CD4-positive, alpha-beta memory T cell (primary cell): ENCODE measurements at regions of chr7 and their contacts with region 1.

Region 1: GRCh38 chr7:143008007-143008901 is 18.7 kb downstream of the OR9A2 start:
- DNase-seq: peak; percentile 69 to 80 (median 76)
- H3K4me3 ChIP-seq: no peak overlapping the region
- H3K4me3 Mint-ChIP-seq: peak overlapping the region in 1 of 8 donors; percentile 15
- H3K27ac ChIP-seq: no peak overlapping the region
- H3K27ac Mint-ChIP-seq: peak overlapping the region in 2 of 7 donors; percentile 5 to 65
- H3K4me1 ChIP-seq: peaks cover 3% of the 10 kb centered on the region
- H3K4me1 Mint-ChIP-seq: peaks cover 4 to 6% (median 6%) of the 10 kb centered on the region in 4 donors
- H3K27me3 ChIP-seq: no peaks in the 10 kb centered on the region
- H3K27me3 Mint-ChIP-seq: peaks cover 6 to 7% of the 10 kb centered on the region in 2 donors

Region 2: GRCh38 chr7:141975806-141976523 is 1032.3 kb before region 1 on chr7:
- CTCF ChIA-PET with region 1: interaction called, 8 read pairs
- POLR2A ChIA-PET with region 1: no interaction called
- intact Hi-C with region 1: loop called (anchors 2 kb)
- DNase-seq: peak; percentile 33 to 54 (median 51)
- H3K4me3 ChIP-seq: peak overlapping the region; percentile 24 to 49
- H3K4me3 Mint-ChIP-seq: peak overlapping the region; percentile 47 to 85 (median 81)
- H3K27ac ChIP-seq: no peak overlapping the region
- H3K27ac Mint-ChIP-seq: peak overlapping the region in 6 of 7 donors; percentile 0 to 86 (median 50)
- H3K4me1 ChIP-seq: peaks cover 9% of the 10 kb centered on the region
- H3K4me1 Mint-ChIP-seq: peaks cover 5 to 18% (median 9%) of the 10 kb centered on the region in 4 donors
- H3K27me3 ChIP-seq: no peaks in the 10 kb centered on the region
- H3K27me3 Mint-ChIP-seq: no peaks in the 10 kb centered on the region

Region 3: DNA sequence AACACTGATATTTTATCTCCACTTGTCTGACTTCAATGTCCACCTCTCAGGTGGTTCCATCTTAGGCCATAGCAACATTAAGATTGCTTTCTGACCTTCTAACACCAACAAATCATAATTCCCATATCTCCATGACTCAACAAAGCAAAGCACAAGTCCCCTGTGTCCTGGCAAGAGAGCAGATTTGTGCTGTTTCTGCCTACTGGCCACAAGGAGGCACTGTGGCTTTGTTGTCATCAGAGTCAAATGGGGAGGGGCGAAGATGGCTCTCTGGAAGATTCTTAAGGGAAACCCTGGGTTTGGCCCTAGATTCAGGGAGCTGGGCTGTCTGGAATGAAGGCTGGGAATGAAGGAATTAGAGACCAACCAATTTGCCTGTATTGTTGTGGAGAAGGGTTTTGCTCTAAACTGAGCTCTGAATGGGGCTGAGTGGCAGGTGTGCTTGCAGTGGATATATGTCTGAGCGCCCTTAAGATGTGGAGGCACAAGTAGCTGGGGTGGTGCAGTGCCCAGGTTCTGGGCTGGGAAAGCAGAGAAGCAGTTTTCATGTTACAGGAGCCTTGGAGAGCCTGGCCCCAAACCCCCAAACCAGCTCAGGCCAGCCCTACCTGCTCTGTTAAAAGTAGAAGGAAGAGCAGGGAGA is 595.6 kb before region 1 on chr7:
- CTCF ChIA-PET with region 1: interaction called, 5 read pairs
- POLR2A ChIA-PET with region 1: no interaction called
- intact Hi-C with region 1: loop called (anchors 1 kb)
- DNase-seq: peak; percentile 38 to 48 (median 41)
- H3K4me3 ChIP-seq: no peak overlapping the region
- H3K4me3 Mint-ChIP-seq: peak overlapping the region in 4 of 8 donors; percentile 8 to 36 (median 24)
- H3K27ac ChIP-seq: no peak overlapping the region
- H3K27ac Mint-ChIP-seq: peak overlapping the region in 4 of 7 donors; percentile 18 to 74 (median 28)
- H3K4me1 ChIP-seq: no peaks in the 10 kb centered on the region
- H3K4me1 Mint-ChIP-seq: peaks cover 1 to 6% (median 3%) of the 10 kb centered on the region in 4 donors
- H3K27me3 ChIP-seq: no peaks in the 10 kb centered on the region
- H3K27me3 Mint-ChIP-seq: no peaks in the 10 kb centered on the region

Region 4: DNA sequence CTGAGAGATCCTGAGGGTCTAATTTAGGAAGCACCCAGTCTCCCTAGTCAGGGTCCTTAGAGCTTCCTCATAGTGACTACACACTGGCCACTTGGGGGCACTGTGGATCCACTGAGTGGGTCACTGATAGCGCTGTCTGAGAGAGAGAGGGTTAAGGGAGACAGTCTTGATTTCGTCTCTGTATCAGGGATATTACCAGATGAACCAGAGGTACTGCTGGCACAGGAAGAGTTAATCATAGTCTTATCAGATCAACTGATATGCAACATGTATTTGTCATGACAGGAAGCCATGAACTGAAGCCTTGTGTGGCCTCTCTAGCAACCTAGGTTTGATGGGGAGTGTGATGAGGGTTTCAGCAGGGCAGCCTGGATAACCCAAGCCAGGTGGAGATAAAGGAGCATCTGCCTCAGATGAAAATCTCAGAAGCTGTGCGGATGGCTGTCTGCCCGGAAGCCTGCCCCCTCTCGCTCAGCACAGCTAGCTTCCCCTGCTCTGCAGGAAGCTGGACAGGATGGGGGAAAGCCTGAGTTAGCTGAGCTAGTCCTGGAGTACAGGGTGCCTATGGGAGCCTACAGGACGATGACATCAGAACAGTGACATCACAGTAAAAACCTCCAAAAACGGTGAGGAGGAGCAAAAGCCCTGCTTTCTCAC is 473.0 kb before region 1 on chr7:
- CTCF ChIA-PET with region 1: interaction called, 14 read pairs
- POLR2A ChIA-PET with region 1: no interaction called
- intact Hi-C with region 1: loop called (anchors 1 kb)
- DNase-seq: peak; percentile 57 to 80 (median 64)
- H3K4me3 ChIP-seq: peak overlapping the region in 1 of 2 donors; percentile 38
- H3K4me3 Mint-ChIP-seq: peak overlapping the region; percentile 61 to 86 (median 76)
- H3K27ac ChIP-seq: peak overlapping the region; percentile 49
- H3K27ac Mint-ChIP-seq: peak overlapping the region; percentile 32 to 94 (median 87)
- H3K4me1 ChIP-seq: peaks cover 28% of the 10 kb centered on the region
- H3K4me1 Mint-ChIP-seq: peaks cover 17 to 40% (median 23%) of the 10 kb centered on the region in 4 donors
- H3K27me3 ChIP-seq: no peaks in the 10 kb centered on the region
- H3K27me3 Mint-ChIP-seq: peaks cover 0 to 2% of the 10 kb centered on the region in 2 donors

Region 5: GRCh38 chr7:142853739-142854371 is 154.4 kb before region 1 on chr7:
- CTCF ChIA-PET with region 1: interaction called, 32 read pairs
- POLR2A ChIA-PET with region 1: interaction called, 4 read pairs
- intact Hi-C with region 1: loop called (anchors 1 kb)
- DNase-seq: peak; percentile 63 to 72 (median 71)
- H3K4me3 ChIP-seq: peak overlapping the region; percentile 81 to 90
- H3K4me3 Mint-ChIP-seq: peak overlapping the region; percentile 93 to 98 (median 97)
- H3K27ac ChIP-seq: peak overlapping the region; percentile 27
- H3K27ac Mint-ChIP-seq: peak overlapping the region; percentile 86 to 96 (median 92)
- H3K4me1 ChIP-seq: peaks cover 24% of the 10 kb centered on the region
- H3K4me1 Mint-ChIP-seq: peaks cover 12 to 34% (median 19%) of the 10 kb centered on the region in 4 donors
- H3K27me3 ChIP-seq: no peaks in the 10 kb centered on the region
- H3K27me3 Mint-ChIP-seq: peaks cover 3% of the 10 kb centered on the region in 2 donors

Region 6: GRCh38 chr7:143416565-143417149 is 408.4 kb after region 1 on chr7:
- CTCF ChIA-PET with region 1: interaction called, 6 read pairs
- POLR2A ChIA-PET with region 1: no interaction called
- intact Hi-C with region 1: loop called (anchors 1 kb)
- DNase-seq: peak in 4 of 5 donors; percentile 47 to 62 (median 53)
- H3K4me3 ChIP-seq: no peak overlapping the region
- H3K4me3 Mint-ChIP-seq: no peak overlapping the region
- H3K27ac ChIP-seq: no peak overlapping the region
- H3K27ac Mint-ChIP-seq: no peak overlapping the region
- H3K4me1 ChIP-seq: no peaks in the 10 kb centered on the region
- H3K4me1 Mint-ChIP-seq: peaks cover 0 to 9% (median 8%) of the 10 kb centered on the region in 4 donors
- H3K27me3 ChIP-seq: no peaks in the 10 kb centered on the region
- H3K27me3 Mint-ChIP-seq: no peaks in the 10 kb centered on the region